Activated naive CD4-positive, alpha-beta T cell treated with anti-CD3 and anti-CD28 coated beads for 36 hours (primary cell): ENCODE measurements at regions of chr21 and their contacts with region 1.

Region 1: DNA sequence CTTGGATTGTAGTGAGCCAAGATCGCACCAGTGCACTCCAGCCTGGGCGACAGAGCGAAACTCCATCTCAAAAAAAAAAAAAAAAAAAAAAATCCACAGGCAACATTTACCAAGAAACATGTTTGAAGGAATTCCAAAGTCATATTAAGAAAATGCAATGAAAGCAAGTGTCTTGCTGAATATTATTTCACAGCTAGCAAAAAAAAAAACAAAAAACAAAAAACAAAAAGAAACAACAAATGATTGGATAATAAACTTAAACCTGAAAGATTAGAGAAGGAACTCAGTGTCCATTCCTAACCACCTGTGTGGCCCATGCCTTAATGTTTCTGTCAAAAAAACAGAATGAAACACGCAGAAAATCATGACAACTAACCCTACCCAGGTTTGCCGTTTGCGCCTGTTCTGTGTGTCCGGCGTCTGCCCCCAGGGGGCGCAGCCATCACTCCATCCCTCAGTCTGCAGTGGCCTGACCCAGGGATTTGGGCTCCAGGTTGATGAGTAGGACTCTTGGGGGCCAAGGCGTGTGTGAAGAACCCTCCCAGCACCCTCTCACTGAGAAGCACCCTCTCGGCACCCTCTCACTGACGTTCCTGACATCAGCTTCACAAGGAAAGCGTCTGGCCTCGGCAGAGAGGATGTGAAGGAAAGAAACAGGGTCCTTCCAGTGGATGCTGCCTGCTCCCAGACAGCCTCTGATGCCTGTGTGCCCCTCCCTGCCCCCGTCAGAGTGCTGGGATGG is 19.2 kb upstream of the PTTG1IP start:
- DNase-seq: peak; percentile 85
- H3K4me3 Mint-ChIP-seq: no peak overlapping the region
- H3K27ac Mint-ChIP-seq: peak overlapping the region; percentile 75
- H3K4me1 Mint-ChIP-seq: peaks cover 7% of the 10 kb centered on the region
- H3K27me3 Mint-ChIP-seq: no peaks in the 10 kb centered on the region

Region 2: DNA sequence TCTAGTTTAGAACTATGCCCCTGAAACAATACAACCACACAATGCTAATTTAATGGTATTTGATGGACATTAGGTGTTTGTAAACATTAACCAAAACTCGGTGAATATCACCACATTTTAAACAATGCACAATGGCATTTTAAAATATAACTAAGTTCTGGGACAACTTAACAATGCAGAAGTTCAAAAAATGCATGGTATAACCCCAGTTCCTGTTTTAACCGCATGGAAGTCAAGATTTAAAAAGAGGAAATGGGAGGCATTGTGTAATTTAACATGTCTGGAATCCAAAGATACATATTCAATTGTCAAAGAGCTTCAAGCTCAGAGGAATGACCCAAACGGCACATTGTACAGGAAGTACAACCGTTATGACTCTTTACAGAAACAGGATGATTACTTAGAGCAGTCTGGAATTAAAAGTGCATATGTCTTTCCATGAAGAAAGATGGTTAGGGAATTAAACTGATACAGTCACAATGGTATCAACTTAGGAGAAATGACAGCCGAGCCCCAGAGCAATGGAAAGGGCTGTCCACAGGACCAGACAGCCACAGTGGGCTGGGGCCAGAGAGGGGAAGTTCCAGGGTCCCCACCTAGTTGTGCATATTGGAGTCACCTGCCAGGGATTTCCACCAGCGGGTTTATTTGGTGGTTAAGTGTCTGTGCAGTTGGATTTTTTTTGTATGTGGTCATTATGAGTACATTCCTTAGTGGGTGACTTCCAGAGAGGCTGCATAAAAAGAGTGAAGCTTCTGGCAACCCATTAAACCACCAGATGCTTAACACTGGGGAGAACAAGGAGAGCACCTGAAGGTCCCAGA is 11.7 kb before region 1 on chr21:
- CTCF ChIA-PET with region 1: interaction called, 19 read pairs
- intact Hi-C with region 1: no loop called
- DNase-seq: peak; percentile 55
- H3K4me3 Mint-ChIP-seq: no peak overlapping the region
- H3K27ac Mint-ChIP-seq: peak overlapping the region; percentile 69
- H3K4me1 Mint-ChIP-seq: peaks cover 26% of the 10 kb centered on the region
- H3K27me3 Mint-ChIP-seq: no peaks in the 10 kb centered on the region

Region 3: GRCh38 chr21:44911389-44912157 is 18.9 kb after region 1 on chr21:
- CTCF ChIA-PET with region 1: interaction called, 8 read pairs
- intact Hi-C with region 1: loop called (anchors 1 kb)
- DNase-seq: peak; percentile 70
- H3K4me3 Mint-ChIP-seq: peak overlapping the region; percentile 57
- H3K27ac Mint-ChIP-seq: peak overlapping the region; percentile 93
- H3K4me1 Mint-ChIP-seq: peaks cover 78% of the 10 kb centered on the region
- H3K27me3 Mint-ChIP-seq: no peaks in the 10 kb centered on the region

Region 4: GRCh38 chr21:44941567-44941966 is 48.9 kb after region 1 on chr21:
- CTCF ChIA-PET with region 1: no interaction called
- intact Hi-C with region 1: no loop called
- DNase-seq: no peak
- H3K4me3 Mint-ChIP-seq: peak overlapping the region; percentile 80
- H3K27ac Mint-ChIP-seq: no peak overlapping the region
- H3K4me1 Mint-ChIP-seq: peaks cover 49% of the 10 kb centered on the region
- H3K27me3 Mint-ChIP-seq: no peaks in the 10 kb centered on the region